Calu3 (cell line): ENCODE measurements at regions of chr14 and their contacts with region 1.

Region 1: GRCh38 chr14:67963960-67964744 is 144.6 kb downstream of the RAD51B start:
- DNase-seq: peak; percentile 39
- H3K4me3 Mint-ChIP-seq: peak overlapping the region; percentile 6
- H3K27ac Mint-ChIP-seq: peak overlapping the region; percentile 68
- H3K4me1 Mint-ChIP-seq: peaks cover 56% of the 10 kb centered on the region
- H3K27me3 Mint-ChIP-seq: no peaks in the 10 kb centered on the region
- CTCF ChIP-seq: no peak

Region 2: GRCh38 chr14:68146807-68147206 is 182.7 kb after region 1 on chr14:
- CTCF ChIA-PET with region 1: no interaction called
- intact Hi-C with region 1: loop called (anchors 2 kb)
- DNase-seq: peak; percentile 35
- H3K4me3 Mint-ChIP-seq: no peak overlapping the region
- H3K27ac Mint-ChIP-seq: peak overlapping the region; percentile 93
- H3K4me1 Mint-ChIP-seq: peaks cover 59% of the 10 kb centered on the region
- H3K27me3 Mint-ChIP-seq: no peaks in the 10 kb centered on the region
- CTCF ChIP-seq: no peak